Activated CD8-positive, alpha-beta T cell treated with anti-CD3 and anti-CD28 coated beads for 36 hours (primary cell): ENCODE measurements at regions of chr1 and their contacts with region 1.

Region 1: GRCh38 chr1:86470859-86471258 is 2.1 kb downstream of the CLCA1 start:
- DNase-seq: no peak
- ATAC-seq: no peak
- H3K4me3 Mint-ChIP-seq: no peak overlapping the region
- H3K27ac Mint-ChIP-seq: no peak overlapping the region
- H3K4me1 Mint-ChIP-seq: no peaks in the 10 kb centered on the region
- H3K27me3 Mint-ChIP-seq: peaks cover 10% of the 10 kb centered on the region
- CTCF ChIP-seq: no peak

Region 2: DNA sequence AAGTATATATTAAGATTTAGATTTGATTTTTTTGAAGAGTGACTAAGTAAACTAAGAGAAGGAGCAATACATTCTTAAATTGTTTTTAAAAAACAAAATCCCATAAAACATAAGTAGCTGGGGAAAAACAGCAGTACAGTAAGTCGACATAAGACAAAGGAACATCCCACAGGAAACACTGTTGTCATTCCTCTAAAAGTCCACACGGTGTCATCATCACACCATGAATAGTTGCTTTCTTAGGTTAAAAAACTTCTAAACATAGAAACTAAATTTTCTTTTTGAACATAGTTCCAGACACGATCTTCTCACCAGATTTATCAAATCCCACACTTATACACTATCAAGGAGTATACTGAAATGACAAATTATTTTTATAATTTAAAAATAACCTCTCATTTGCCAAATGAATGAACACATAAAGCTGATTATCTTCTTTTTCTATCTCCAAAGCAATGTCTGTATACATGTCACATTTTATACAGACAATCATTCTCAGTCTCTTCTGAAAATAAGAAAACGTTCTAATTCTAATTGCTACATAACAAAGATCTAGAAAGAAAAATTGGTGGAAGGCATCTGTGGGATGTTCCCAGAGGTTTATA is 90.5 kb before region 1 on chr1:
- CTCF ChIA-PET with region 1: interaction called, 17 read pairs
- POLR2A ChIA-PET with region 1: no interaction called
- intact Hi-C with region 1: no loop called
- DNase-seq: peak; percentile 10
- ATAC-seq: peak; percentile 68
- H3K4me3 Mint-ChIP-seq: no peak overlapping the region
- H3K27ac Mint-ChIP-seq: no peak overlapping the region
- H3K4me1 Mint-ChIP-seq: peaks cover 8% of the 10 kb centered on the region
- H3K27me3 Mint-ChIP-seq: no peaks in the 10 kb centered on the region
- CTCF ChIP-seq: peak; percentile 81

Region 3: DNA sequence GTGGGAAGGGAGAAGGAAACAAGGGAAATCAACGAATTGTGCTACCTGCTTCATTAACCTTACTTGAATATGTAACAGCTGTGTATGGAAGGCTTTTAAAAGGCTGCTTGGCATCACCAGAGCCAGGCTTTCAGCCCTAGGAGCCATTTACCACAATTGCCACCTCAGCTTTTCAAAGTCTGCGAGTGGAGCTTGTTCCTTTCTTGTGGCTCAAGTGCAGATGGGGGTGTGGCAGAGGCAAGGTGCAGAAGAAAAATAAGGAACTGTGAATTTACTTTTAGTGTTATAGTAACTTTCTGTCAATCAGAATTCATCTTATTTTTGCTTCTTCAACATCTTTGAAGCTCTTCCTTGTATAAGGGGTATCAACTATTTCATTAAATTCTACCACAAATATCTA is 29.3 kb before region 1 on chr1:
- CTCF ChIA-PET with region 1: interaction called, 11 read pairs
- POLR2A ChIA-PET with region 1: no interaction called
- intact Hi-C with region 1: no loop called
- DNase-seq: peak; percentile 13
- ATAC-seq: no peak
- H3K4me3 Mint-ChIP-seq: no peak overlapping the region
- H3K27ac Mint-ChIP-seq: no peak overlapping the region
- H3K4me1 Mint-ChIP-seq: peaks cover 7% of the 10 kb centered on the region
- H3K27me3 Mint-ChIP-seq: peaks cover 8% of the 10 kb centered on the region
- CTCF ChIP-seq: no peak

Region 4: DNA sequence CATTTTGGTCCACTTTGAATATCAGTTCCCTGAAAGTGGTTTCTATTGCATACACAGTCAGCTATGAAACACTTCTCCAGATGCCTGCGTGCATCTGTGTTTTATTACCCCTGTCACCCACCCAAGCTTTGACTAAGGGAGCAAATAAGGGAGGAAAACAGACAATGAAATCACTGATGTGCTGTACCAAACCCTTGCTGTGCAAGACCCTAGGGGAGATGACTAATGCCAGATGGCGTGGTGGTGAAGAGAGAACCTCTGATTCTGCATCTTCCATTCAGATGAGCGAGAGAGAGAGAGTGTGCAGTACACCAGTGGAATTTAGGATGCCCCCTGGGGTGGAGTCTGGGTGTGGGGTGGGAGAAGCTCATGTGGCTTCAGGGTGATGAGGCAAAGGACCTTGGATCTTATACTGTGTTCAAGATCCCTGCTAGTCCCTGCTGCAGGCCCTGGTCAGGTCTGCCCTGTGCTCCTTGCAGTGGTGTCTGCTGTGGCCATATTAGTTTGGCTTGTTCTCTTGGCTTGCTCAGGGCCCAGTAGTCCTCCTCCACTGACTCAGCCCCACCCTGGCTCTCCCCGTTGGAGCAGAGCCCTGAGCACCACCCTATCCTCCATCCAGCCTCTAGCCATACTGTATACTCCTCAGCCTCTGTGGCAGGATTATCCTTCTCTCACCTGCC is 16.4 kb after region 1 on chr1:
- CTCF ChIA-PET with region 1: interaction called, 16 read pairs
- POLR2A ChIA-PET with region 1: no interaction called
- intact Hi-C with region 1: no loop called
- DNase-seq: no peak
- ATAC-seq: no peak
- H3K4me3 Mint-ChIP-seq: no peak overlapping the region
- H3K27ac Mint-ChIP-seq: no peak overlapping the region
- H3K4me1 Mint-ChIP-seq: no peaks in the 10 kb centered on the region
- H3K27me3 Mint-ChIP-seq: no peaks in the 10 kb centered on the region
- CTCF ChIP-seq: no peak

Region 5: GRCh38 chr1:86582161-86582560 is 111.3 kb after region 1 on chr1:
- CTCF ChIA-PET with region 1: no interaction called
- POLR2A ChIA-PET with region 1: no interaction called
- intact Hi-C with region 1: no loop called
- DNase-seq: no peak
- ATAC-seq: no peak
- H3K4me3 Mint-ChIP-seq: no peak overlapping the region
- H3K27ac Mint-ChIP-seq: no peak overlapping the region
- H3K4me1 Mint-ChIP-seq: no peaks in the 10 kb centered on the region
- H3K27me3 Mint-ChIP-seq: no peaks in the 10 kb centered on the region
- CTCF ChIP-seq: no peak

Region 6: DNA sequence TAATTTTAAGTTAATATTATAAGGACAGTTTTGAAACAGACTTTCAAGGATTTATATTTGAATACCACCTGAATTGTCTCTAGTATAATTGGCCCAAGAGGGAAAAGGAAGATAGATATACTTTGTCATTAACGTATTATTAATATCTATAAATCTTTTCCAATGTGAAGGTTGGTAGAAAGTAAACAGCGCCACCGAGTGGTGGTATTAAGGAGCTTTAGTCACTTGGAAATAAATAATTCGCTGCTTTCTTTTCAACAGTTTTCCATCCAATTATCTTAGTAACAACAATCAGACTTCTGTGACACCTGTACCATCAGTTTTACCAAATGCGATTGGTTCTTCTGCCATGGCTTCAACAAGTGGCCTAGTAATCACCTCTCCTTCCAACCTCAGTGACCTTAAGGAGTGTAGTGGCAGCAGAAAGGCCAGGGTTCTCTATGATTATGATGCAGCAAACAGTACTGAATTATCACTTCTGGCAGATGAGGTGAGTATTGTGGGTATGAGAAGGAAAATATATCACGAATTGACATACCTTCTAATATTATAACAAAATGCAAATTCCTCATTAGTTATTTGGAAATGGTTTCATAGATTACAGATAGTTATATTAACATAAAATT is 271.2 kb after region 1 on chr1:
- CTCF ChIA-PET with region 1: interaction called, 4 read pairs
- POLR2A ChIA-PET with region 1: no interaction called
- intact Hi-C with region 1: loop called (anchors 10 kb)
- DNase-seq: peak; percentile 58
- ATAC-seq: no peak
- H3K4me3 Mint-ChIP-seq: no peak overlapping the region
- H3K27ac Mint-ChIP-seq: no peak overlapping the region
- H3K4me1 Mint-ChIP-seq: no peaks in the 10 kb centered on the region
- H3K27me3 Mint-ChIP-seq: no peaks in the 10 kb centered on the region
- CTCF ChIP-seq: peak; percentile 70